ENCODE measurements at regions of chr2 and their contacts with region 1.

Region 1: GRCh38 chr2:219002395-219003266 is 9.4 kb upstream of the CRYBA2 start:
- DNase-seq: peak; percentile 95
- ATAC-seq: peak; percentile 69
- H3K4me3 Mint-ChIP-seq: peak overlapping the region; percentile 83
- H3K27ac Mint-ChIP-seq: no peak overlapping the region
- H3K4me1 Mint-ChIP-seq: peaks cover 22% of the 10 kb centered on the region
- H3K27me3 Mint-ChIP-seq: peaks cover 100% of the 10 kb centered on the region
- CTCF ChIP-seq: peak; percentile 29; the same call in 1 of the 2 replicates

Region 2: GRCh38 chr2:218860950-218861381 is 141.7 kb before region 1 on chr2:
- CTCF ChIA-PET with region 1: interaction called, 12 read pairs
- POLR2A ChIA-PET with region 1: no interaction called
- DNase-seq: peak; percentile 87
- ATAC-seq: peak; percentile 94
- H3K4me3 Mint-ChIP-seq: peak overlapping the region; percentile 69
- H3K27ac Mint-ChIP-seq: no peak overlapping the region
- H3K4me1 Mint-ChIP-seq: peaks cover 38% of the 10 kb centered on the region
- H3K27me3 Mint-ChIP-seq: peaks cover 93% of the 10 kb centered on the region
- CTCF ChIP-seq: no peak

Region 3: DNA sequence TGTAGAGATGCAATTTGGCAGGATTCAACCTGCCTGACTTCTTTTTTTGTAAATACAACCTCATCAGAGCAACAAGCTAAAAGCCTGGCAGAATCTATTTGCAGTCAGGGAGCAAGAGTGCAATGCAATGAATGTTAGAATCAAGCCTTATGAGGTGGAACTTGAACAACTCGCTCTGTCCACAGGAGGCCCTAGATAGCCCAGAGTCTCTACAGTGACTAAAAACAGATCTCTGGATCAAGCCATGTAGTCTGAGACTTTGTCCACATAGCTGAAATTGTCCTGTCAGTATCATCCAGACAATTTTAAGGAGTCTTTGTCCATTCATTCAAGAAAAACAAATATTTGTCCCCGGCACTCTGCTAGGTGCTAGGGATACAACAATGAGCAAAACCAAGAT is 75.2 kb before region 1 on chr2:
- CTCF ChIA-PET with region 1: no interaction called
- POLR2A ChIA-PET with region 1: no interaction called
- DNase-seq: no peak
- ATAC-seq: no peak
- H3K4me3 Mint-ChIP-seq: no peak overlapping the region
- H3K27ac Mint-ChIP-seq: no peak overlapping the region
- H3K4me1 Mint-ChIP-seq: no peaks in the 10 kb centered on the region
- H3K27me3 Mint-ChIP-seq: peaks cover 44% of the 10 kb centered on the region
- CTCF ChIP-seq: no peak

Region 4: GRCh38 chr2:218953481-218953881 is 49.1 kb before region 1 on chr2:
- CTCF ChIA-PET with region 1: interaction called, 13 read pairs
- POLR2A ChIA-PET with region 1: no interaction called
- DNase-seq: peak; percentile 61
- ATAC-seq: peak; percentile 81
- H3K4me3 Mint-ChIP-seq: no peak overlapping the region
- H3K27ac Mint-ChIP-seq: no peak overlapping the region
- H3K4me1 Mint-ChIP-seq: no peaks in the 10 kb centered on the region
- H3K27me3 Mint-ChIP-seq: peaks cover 68% of the 10 kb centered on the region
- CTCF ChIP-seq: no peak

Region 5: DNA sequence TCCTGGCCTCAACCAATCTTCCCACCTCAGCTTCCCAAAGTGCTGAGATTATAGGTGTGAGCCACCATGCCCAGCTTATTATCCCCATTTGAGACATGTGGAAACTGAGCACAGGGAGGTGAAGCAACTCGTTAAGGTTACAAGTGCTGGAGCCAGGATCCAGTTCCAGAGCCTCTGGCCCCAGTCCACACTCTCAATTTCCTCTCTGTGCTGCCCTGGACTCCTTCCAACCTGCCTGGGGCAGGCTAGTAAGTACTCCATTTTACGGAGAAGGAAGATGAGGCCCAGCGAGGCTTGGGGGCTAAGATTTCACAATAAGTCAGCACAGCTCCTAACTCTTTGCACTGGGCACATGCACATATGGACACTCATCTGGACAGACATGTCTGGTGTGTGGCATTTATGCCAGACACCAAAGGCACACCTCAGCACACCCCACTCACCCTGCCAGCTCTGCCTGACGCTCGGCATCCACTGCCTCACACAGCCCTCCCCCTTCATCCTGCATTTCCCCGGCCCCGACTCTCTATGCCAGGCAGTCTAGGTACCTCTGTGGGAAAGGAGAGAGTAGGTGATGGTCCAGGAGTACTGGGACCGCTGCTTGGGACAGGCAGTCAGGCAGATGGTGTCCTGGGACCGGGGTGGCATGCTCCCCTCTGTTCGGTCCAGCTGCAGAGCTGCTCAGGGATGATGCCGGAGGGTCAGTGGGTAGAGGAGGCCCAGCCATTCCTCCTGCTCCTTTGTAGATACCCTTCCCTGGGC is 18.2 kb after region 1 on chr2:
- CTCF ChIA-PET with region 1: interaction called, 70 read pairs
- POLR2A ChIA-PET with region 1: no interaction called
- DNase-seq: no peak
- ATAC-seq: no peak
- H3K4me3 Mint-ChIP-seq: no peak overlapping the region
- H3K27ac Mint-ChIP-seq: no peak overlapping the region
- H3K4me1 Mint-ChIP-seq: 0 out of 2 replicates have a peak, but pooled peaks cover 2% of the 10 kb centered on the region
- H3K27me3 Mint-ChIP-seq: no peaks in the 10 kb centered on the region; the same call in 1 of the 2 replicates
- CTCF ChIP-seq: no peak

Measured in WTC11 (cell line).